Naive thymus-derived CD4-positive, alpha-beta T cell (primary cell): ENCODE measurements at regions of chr9 and their contacts with region 1.

Region 1: DNA sequence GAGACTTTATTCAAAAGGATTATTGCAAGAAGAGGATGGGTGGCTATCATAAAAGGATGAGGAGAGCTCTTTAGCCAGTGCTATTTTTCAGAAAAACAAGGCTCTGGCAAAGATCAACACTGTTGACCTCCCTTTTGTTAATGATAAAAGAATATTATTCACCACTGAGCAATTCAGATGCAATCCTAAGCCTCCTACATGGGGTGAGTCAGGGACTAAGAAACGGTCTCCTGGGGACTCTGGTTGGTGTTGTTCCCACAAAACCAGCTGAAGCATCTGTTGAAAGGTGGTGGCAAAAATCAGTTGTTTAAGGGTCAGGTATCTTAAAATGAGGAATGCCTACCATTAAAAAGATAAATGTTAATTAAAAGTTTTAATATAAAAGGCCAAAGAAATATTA is 7.7 kb upstream of the GCNT1 start:
- DNase-seq: no peak
- ATAC-seq: no peak
- H3K4me3 ChIP-seq: no peak overlapping the region
- H3K4me3 Mint-ChIP-seq: no peak overlapping the region
- H3K27ac ChIP-seq: no peak overlapping the region
- H3K27ac Mint-ChIP-seq: no peak overlapping the region
- H3K4me1 ChIP-seq: no peaks in the 10 kb centered on the region
- H3K4me1 Mint-ChIP-seq: peaks cover 3 to 16% (median 4%) of the 10 kb centered on the region in 7 donors
- H3K27me3 ChIP-seq: no peaks in the 10 kb centered on the region
- H3K27me3 Mint-ChIP-seq: no peaks in the 10 kb centered on the region

Region 2: GRCh38 chr9:76519075-76519835 is 68.0 kb after region 1 on chr9:
- CTCF ChIA-PET with region 1: no interaction called
- POLR2A ChIA-PET with region 1: no interaction called
- intact Hi-C with region 1: no loop called
- DNase-seq: no peak
- ATAC-seq: no peak
- H3K4me3 ChIP-seq: no peak overlapping the region
- H3K4me3 Mint-ChIP-seq: no peak overlapping the region
- H3K27ac ChIP-seq: no peak overlapping the region
- H3K27ac Mint-ChIP-seq: no peak overlapping the region
- H3K4me1 ChIP-seq: no peaks in the 10 kb centered on the region
- H3K4me1 Mint-ChIP-seq: no peaks in the 10 kb centered on the region
- H3K27me3 ChIP-seq: peaks cover 0 to 3% of the 10 kb centered on the region in 2 donors
- H3K27me3 Mint-ChIP-seq: peaks cover 9 to 26% (median 10%) of the 10 kb centered on the region in 5 donors

Region 3: GRCh38 chr9:76658535-76659231 is 207.4 kb after region 1 on chr9:
- CTCF ChIA-PET with region 1: interaction called, 3 read pairs
- POLR2A ChIA-PET with region 1: no interaction called
- intact Hi-C with region 1: loop called (anchors 1 kb)
- DNase-seq: peak in 4 of 9 donors; percentile 21 to 44 (median 25)
- ATAC-seq: peak; percentile 86
- H3K4me3 ChIP-seq: no peak overlapping the region
- H3K4me3 Mint-ChIP-seq: no peak overlapping the region
- H3K27ac ChIP-seq: no peak overlapping the region
- H3K27ac Mint-ChIP-seq: no peak overlapping the region
- H3K4me1 ChIP-seq: peaks cover 0 to 13% of the 10 kb centered on the region in 2 donors
- H3K4me1 Mint-ChIP-seq: peaks cover 0 to 52% (median 12%) of the 10 kb centered on the region in 7 donors
- H3K27me3 ChIP-seq: no peaks in the 10 kb centered on the region
- H3K27me3 Mint-ChIP-seq: peaks cover 0 to 18% (median 0%) of the 10 kb centered on the region in 5 donors

Region 4: DNA sequence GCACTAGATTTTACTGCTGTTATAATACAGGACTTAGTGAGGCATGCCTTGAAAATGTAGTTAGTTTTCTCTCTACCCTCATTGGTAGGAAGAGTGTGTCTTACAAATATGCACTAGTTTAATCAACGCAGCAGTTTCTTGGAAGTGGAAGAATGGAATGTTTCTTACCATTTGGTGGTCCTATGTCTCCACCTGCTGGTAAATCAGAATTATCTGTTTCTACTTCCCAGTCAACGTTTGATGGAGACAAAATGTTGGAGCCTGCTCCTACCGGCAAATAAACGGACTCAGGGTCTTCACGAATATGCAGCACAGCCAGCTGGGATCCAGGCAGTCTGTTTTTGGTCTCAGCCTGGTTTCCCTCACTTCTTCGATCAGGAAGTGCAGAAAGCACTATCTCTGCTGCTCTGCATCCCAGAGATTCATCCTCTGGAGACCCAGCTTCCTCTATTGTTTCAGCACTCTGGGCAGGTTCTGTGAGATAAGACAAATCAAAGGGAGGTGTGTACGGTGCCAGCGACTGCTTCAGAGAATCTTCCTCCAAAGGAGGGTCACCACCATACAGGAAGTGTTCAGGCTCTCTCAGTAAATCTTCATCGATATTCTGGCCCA is 253.5 kb after region 1 on chr9:
- CTCF ChIA-PET with region 1: interaction called, 23 read pairs
- POLR2A ChIA-PET with region 1: interaction called, 3 read pairs
- intact Hi-C with region 1: loop called (anchors 1 kb)
- DNase-seq: peak in 7 of 9 donors; percentile 12 to 55 (median 35)
- ATAC-seq: peak; percentile 63
- H3K4me3 ChIP-seq: no peak overlapping the region
- H3K4me3 Mint-ChIP-seq: no peak overlapping the region
- H3K27ac ChIP-seq: no peak overlapping the region
- H3K27ac Mint-ChIP-seq: no peak overlapping the region
- H3K4me1 ChIP-seq: no peaks in the 10 kb centered on the region
- H3K4me1 Mint-ChIP-seq: peaks cover 0 to 16% (median 1%) of the 10 kb centered on the region in 7 donors
- H3K27me3 ChIP-seq: no peaks in the 10 kb centered on the region
- H3K27me3 Mint-ChIP-seq: peaks cover 35 to 51% (median 40%) of the 10 kb centered on the region in 5 donors

Region 5: DNA sequence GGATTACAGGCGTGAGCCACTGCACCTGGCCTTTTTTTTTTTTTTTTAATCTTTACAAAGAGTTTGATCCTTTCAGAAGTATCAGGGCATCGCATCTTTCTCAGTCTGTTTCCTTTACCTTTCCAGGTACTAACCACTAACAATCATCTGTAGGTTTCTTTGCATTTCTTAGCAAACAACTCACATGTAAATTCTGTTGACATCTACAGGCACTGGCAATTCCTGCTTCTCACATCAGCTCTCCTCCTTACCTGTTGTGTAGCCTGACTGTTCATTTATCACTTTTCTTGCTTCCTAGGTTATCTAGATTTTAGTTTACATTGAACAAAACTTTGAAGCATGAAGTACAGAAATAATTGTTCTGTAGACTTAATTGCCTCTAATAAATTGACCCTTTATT is 698.6 kb after region 1 on chr9:
- CTCF ChIA-PET with region 1: no interaction called
- POLR2A ChIA-PET with region 1: no interaction called
- intact Hi-C with region 1: loop called in 1 of 2 experiments (anchors 1 kb)
- DNase-seq: no peak
- ATAC-seq: no peak
- H3K4me3 ChIP-seq: no peak overlapping the region
- H3K4me3 Mint-ChIP-seq: no peak overlapping the region
- H3K27ac ChIP-seq: no peak overlapping the region
- H3K27ac Mint-ChIP-seq: no peak overlapping the region
- H3K4me1 ChIP-seq: no peaks in the 10 kb centered on the region
- H3K4me1 Mint-ChIP-seq: no peaks in the 10 kb centered on the region
- H3K27me3 ChIP-seq: no peaks in the 10 kb centered on the region
- H3K27me3 Mint-ChIP-seq: peaks cover 10 to 24% (median 18%) of the 10 kb centered on the region in 5 donors